ENCODE measurements at regions of chr14 and their contacts with region 1.

Region 1: GRCh38 chr14:73633116-73634010 is 11.4 kb upstream of the DNAL1 start:
- DNase-seq: peak; percentile 48
- ATAC-seq: peak; percentile 94
- H3K4me3 ChIP-seq: peak overlapping the region; percentile 65
- H3K27ac ChIP-seq: no peak overlapping the region
- H3K4me1 ChIP-seq: peaks cover 8% of the 10 kb centered on the region
- H3K27me3 ChIP-seq: peaks cover 0 to 3% of the 10 kb centered on the region in 2 experiments; a peak in 1 of 4 replicates
- CTCF ChIP-seq: peak; percentile 78 to 93 (median 83); a peak in 5 of 6 replicates
- EP300 ChIP-seq: no peak
- POLR2A ChIP-seq: no peak
- RAD21 ChIP-seq: peak; percentile 96

Region 2: DNA sequence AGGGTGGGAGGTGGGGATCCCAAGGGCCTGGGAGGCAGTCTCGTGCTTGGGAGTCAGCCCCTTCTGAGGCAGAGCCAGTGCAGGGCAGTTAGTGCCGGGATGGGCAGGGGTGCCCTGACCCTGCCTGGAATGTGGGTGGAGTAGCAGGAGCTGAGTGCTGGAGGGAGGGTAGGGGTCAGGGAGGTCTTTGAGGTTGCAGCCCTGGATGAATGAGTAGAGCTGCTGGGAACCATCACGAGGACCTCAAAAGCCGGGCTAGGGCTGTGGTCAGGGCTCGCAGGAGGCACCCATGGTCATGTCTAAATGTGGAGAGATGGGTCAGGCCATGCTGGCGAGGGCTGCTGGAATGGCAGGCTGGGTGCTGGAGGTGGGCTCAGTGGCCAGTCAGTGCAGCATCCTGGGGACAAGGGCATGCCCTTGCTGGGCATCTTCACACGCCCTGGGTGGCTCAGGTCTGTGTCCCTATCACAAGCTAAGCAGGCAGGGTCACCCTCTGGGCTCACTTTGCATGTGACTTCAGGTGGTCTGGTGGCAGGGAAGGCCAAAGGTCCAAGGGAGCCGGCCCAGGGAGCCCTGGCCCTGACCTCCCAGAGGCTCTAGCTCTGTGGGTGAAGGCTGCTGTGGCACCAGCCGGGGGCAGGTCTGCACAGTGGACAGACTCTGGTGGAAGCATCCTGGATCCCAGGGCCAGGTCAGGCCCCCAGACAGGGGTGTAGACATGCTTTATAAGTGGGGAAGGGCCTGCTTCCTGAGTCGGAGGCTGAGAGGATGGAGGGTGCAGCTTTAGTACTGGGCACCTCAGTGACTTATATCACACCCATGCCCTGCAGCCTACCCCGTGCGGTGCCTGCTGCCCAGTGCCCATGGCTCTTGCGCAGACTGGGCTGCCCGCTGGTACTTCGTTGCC is 371.6 kb before region 1 on chr14:
- CTCF ChIA-PET with region 1: no interaction called
- POLR2A ChIA-PET with region 1: no interaction called
- RAD21 ChIA-PET with region 1: no interaction called
- SMC1A ChIA-PET with region 1: no interaction called
- in situ Hi-C with region 1: no loop called
- intact Hi-C with region 1: no loop called
- DNase-seq: no peak
- ATAC-seq: no peak
- H3K4me3 ChIP-seq: no peak overlapping the region
- H3K27ac ChIP-seq: no peak overlapping the region
- H3K4me1 ChIP-seq: no peaks in the 10 kb centered on the region; the same call in 1 of the 2 replicates
- H3K27me3 ChIP-seq: no peaks in the 10 kb centered on the region; a peak in 1 of 4 replicates
- CTCF ChIP-seq: no peak
- EP300 ChIP-seq: no peak
- POLR2A ChIP-seq: no peak
- RAD21 ChIP-seq: no peak

Region 3: GRCh38 chr14:73491256-73492042 is 141.9 kb before region 1 on chr14:
- CTCF ChIA-PET with region 1: interaction called, 12 read pairs
- POLR2A ChIA-PET with region 1: no interaction called
- RAD21 ChIA-PET with region 1: no interaction called
- SMC1A ChIA-PET with region 1: interaction called, 4 read pairs
- in situ Hi-C with region 1: no loop called
- intact Hi-C with region 1: no loop called
- DNase-seq: no peak
- ATAC-seq: peak; percentile 87
- H3K4me3 ChIP-seq: peak overlapping the region; percentile 80
- H3K27ac ChIP-seq: peak overlapping the region; percentile 72
- H3K4me1 ChIP-seq: peaks cover 17% of the 10 kb centered on the region
- H3K27me3 ChIP-seq: no peaks in the 10 kb centered on the region
- CTCF ChIP-seq: no peak
- EP300 ChIP-seq: no peak
- POLR2A ChIP-seq: no peak
- RAD21 ChIP-seq: no peak

Region 4: GRCh38 chr14:73568381-73568781 is 65.0 kb before region 1 on chr14:
- CTCF ChIA-PET with region 1: interaction called, 41 read pairs
- POLR2A ChIA-PET with region 1: interaction called, 4 read pairs
- RAD21 ChIA-PET with region 1: interaction called, 22 read pairs
- SMC1A ChIA-PET with region 1: interaction called, 12 read pairs
- in situ Hi-C with region 1: no loop called
- intact Hi-C with region 1: no loop called
- DNase-seq: no peak
- ATAC-seq: no peak
- H3K4me3 ChIP-seq: peak overlapping the region; percentile 60
- H3K27ac ChIP-seq: peak overlapping the region; percentile 68
- H3K4me1 ChIP-seq: peaks cover 7% of the 10 kb centered on the region
- H3K27me3 ChIP-seq: no peaks in the 10 kb centered on the region
- CTCF ChIP-seq: no peak
- EP300 ChIP-seq: no peak
- POLR2A ChIP-seq: no peak
- RAD21 ChIP-seq: no peak

Region 5: GRCh38 chr14:73644531-73645247 is 11.3 kb after region 1 on chr14 and contains the start of gene DNAL1:
- CTCF ChIA-PET with region 1: interaction called, 11 read pairs
- POLR2A ChIA-PET with region 1: no interaction called
- RAD21 ChIA-PET with region 1: interaction called, 3 read pairs
- SMC1A ChIA-PET with region 1: interaction called, 4 read pairs
- in situ Hi-C with region 1: no loop called
- intact Hi-C with region 1: no loop called
- DNase-seq: peak; percentile 63
- ATAC-seq: peak; percentile 100
- H3K4me3 ChIP-seq: peak within 1 kb of the TSS; percentile 91
- H3K27ac ChIP-seq: peak within 1 kb of the TSS; percentile 60
- H3K4me1 ChIP-seq: no peaks in the 10 kb centered on the region
- H3K27me3 ChIP-seq: no peaks in the 10 kb centered on the region
- CTCF ChIP-seq: no peak
- EP300 ChIP-seq: no peak
- POLR2A ChIP-seq: peak; percentile 95
- RAD21 ChIP-seq: no peak
- polyA plus RNA-seq, gene DNAL1: 11.5 to 18.2 TPM

Region 6: GRCh38 chr14:73713803-73714655 is 80.7 kb after region 1 on chr14 and contains the start of gene PNMA1:
- CTCF ChIA-PET with region 1: interaction called, 5 read pairs
- POLR2A ChIA-PET with region 1: no interaction called
- RAD21 ChIA-PET with region 1: interaction called, 3 read pairs
- SMC1A ChIA-PET with region 1: interaction called, 3 read pairs
- in situ Hi-C with region 1: no loop called
- intact Hi-C with region 1: loop called (anchors 5 kb)
- DNase-seq: no peak
- ATAC-seq: peak; percentile 89
- H3K4me3 ChIP-seq: peak within 1 kb of the TSS; percentile 89
- H3K27ac ChIP-seq: peak within 1 kb of the TSS; percentile 63
- H3K4me1 ChIP-seq: peaks cover 4% of the 10 kb centered on the region
- H3K27me3 ChIP-seq: no peaks in the 10 kb centered on the region
- CTCF ChIP-seq: no peak
- EP300 ChIP-seq: no peak
- POLR2A ChIP-seq: peak; percentile 86
- RAD21 ChIP-seq: no peak
- polyA plus RNA-seq, gene PNMA1: 1.8 to 6.5 TPM

Region 7: DNA sequence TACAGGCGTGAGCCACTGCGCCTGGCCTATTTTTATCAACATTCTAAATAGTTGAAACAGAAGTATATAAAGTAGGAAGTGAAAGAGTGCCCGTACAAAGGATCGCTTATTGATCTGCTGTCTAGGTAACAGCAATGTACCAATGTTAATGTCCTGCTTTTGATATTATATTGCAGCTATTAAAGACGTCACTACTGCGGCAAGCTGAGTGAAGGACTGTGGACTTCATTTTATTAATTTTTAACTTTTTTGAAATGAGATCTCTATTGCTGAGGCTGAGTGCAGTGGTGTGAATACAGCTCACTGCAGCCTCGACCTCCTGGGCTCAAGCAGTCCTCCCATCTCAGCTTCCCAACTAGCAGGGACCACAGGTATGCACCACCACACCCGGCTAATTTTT is 229.1 kb after region 1 on chr14:
- CTCF ChIA-PET with region 1: interaction called, 4 read pairs
- POLR2A ChIA-PET with region 1: no interaction called
- RAD21 ChIA-PET with region 1: no interaction called
- SMC1A ChIA-PET with region 1: no interaction called
- in situ Hi-C with region 1: no loop called
- intact Hi-C with region 1: loop called (anchors 10 kb)
- DNase-seq: no peak
- ATAC-seq: no peak
- H3K4me3 ChIP-seq: no peak overlapping the region
- H3K27ac ChIP-seq: no peak overlapping the region
- H3K4me1 ChIP-seq: no peaks in the 10 kb centered on the region
- H3K27me3 ChIP-seq: no peaks in the 10 kb centered on the region
- CTCF ChIP-seq: no peak
- EP300 ChIP-seq: no peak
- POLR2A ChIP-seq: no peak
- RAD21 ChIP-seq: no peak

Region 8: GRCh38 chr14:74038015-74038859 is 404.9 kb after region 1 on chr14:
- CTCF ChIA-PET with region 1: no interaction called
- POLR2A ChIA-PET with region 1: no interaction called
- RAD21 ChIA-PET with region 1: no interaction called
- SMC1A ChIA-PET with region 1: no interaction called
- in situ Hi-C with region 1: no loop called
- intact Hi-C with region 1: loop called (anchors 10 kb)
- DNase-seq: no peak
- ATAC-seq: peak; percentile 86
- H3K4me3 ChIP-seq: no peak overlapping the region
- H3K27ac ChIP-seq: no peak overlapping the region
- H3K4me1 ChIP-seq: no peaks in the 10 kb centered on the region
- H3K27me3 ChIP-seq: no peaks in the 10 kb centered on the region
- CTCF ChIP-seq: peak; percentile 42 to 65 (median 59); a peak in 5 of 6 replicates
- EP300 ChIP-seq: no peak
- POLR2A ChIP-seq: no peak
- RAD21 ChIP-seq: peak; percentile 70

Measured in GM12878 (cell line).